Naive thymus-derived CD4-positive, alpha-beta T cell (primary cell): ENCODE measurements at regions of chr3 and their contacts with region 1.

Region 1: DNA sequence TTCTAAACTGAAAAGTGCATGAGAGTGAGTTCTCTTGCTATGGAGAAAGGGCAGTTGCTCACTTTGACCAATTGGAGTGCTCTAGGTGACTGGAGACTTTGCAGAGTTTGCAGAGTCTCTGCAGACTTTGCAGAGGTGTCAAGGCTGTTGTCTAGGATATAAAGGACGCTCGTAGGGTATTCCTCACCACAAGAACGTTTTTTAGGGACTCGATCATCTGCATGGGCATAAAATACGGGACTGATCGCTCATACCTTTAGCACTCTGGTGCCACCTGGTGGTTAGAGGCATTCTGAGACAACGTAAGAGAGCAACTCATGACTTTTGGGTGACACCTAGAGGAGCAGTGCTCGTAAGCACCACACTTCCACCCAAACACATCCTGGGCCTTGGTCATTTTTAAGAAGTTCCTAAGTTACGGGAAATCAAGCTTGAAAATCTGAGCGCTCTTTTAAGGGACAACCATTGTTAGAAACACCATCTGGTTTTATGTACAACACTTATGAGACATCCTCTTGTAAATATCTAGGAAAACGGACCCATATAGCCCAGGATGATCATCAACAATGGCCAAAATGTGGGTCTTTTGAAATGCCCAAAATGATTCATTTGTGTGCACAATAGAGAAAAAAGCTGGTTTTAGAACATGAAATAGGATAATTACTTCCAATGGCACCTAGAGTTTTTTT is 51.6 kb upstream of the XCR1 start:
- DNase-seq: peak; percentile 66 to 89 (median 85)
- ATAC-seq: peak; percentile 100
- H3K4me3 ChIP-seq: no peak overlapping the region
- H3K4me3 Mint-ChIP-seq: peak overlapping the region in 5 of 10 donors; percentile 10 to 63 (median 32)
- H3K27ac ChIP-seq: no peak overlapping the region
- H3K27ac Mint-ChIP-seq: peak overlapping the region in 2 of 9 donors; percentile 3 to 33
- H3K4me1 ChIP-seq: peaks cover 0 to 6% of the 10 kb centered on the region in 2 donors
- H3K4me1 Mint-ChIP-seq: peaks cover 0 to 44% (median 5%) of the 10 kb centered on the region in 7 donors
- H3K27me3 ChIP-seq: no peaks in the 10 kb centered on the region
- H3K27me3 Mint-ChIP-seq: peaks cover 0 to 34% (median 0%) of the 10 kb centered on the region in 5 donors

Region 2: DNA sequence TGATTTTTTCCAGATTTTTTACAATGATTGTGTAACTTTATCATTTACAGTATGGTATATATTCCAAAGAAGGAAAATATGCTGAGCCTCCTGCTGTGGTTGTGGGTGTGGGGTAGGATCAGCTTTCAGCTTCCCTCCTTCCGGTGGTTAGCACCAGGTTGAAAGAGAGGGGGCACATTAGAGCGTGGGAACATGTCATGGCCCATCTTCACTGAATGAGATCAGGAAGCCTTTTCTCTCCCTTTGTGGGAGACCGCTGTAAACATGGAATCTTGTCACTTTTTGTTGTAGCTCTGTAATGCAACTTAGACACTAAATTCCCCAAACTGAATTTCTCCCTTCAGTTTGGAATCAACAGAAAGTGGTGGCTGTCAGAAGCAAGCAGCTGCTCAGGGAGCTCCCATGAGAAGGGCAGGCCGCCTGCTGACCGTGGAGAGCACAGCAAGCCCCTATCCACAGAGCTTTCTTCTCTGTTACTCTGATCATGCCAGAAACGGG is 571.0 kb before region 1 on chr3:
- CTCF ChIA-PET with region 1: interaction called, 4 read pairs
- POLR2A ChIA-PET with region 1: no interaction called
- intact Hi-C with region 1: loop called (anchors 1 to 5 kb)
- DNase-seq: peak in 3 of 9 donors; percentile 8 to 17 (median 14)
- ATAC-seq: no peak
- H3K4me3 ChIP-seq: no peak overlapping the region
- H3K4me3 Mint-ChIP-seq: no peak overlapping the region
- H3K27ac ChIP-seq: no peak overlapping the region
- H3K27ac Mint-ChIP-seq: no peak overlapping the region
- H3K4me1 ChIP-seq: peaks cover 0 to 13% of the 10 kb centered on the region in 2 donors
- H3K4me1 Mint-ChIP-seq: peaks cover 0 to 13% (median 0%) of the 10 kb centered on the region in 7 donors
- H3K27me3 ChIP-seq: no peaks in the 10 kb centered on the region
- H3K27me3 Mint-ChIP-seq: no peaks in the 10 kb centered on the region

Region 3: GRCh38 chr3:45553996-45554666 is 524.7 kb before region 1 on chr3:
- CTCF ChIA-PET with region 1: no interaction called
- POLR2A ChIA-PET with region 1: no interaction called
- intact Hi-C with region 1: no loop called
- DNase-seq: no peak
- ATAC-seq: peak; percentile 60
- H3K4me3 ChIP-seq: no peak overlapping the region
- H3K4me3 Mint-ChIP-seq: no peak overlapping the region
- H3K27ac ChIP-seq: no peak overlapping the region
- H3K27ac Mint-ChIP-seq: peak overlapping the region in 1 of 9 donors; percentile 30
- H3K4me1 ChIP-seq: no peaks in the 10 kb centered on the region
- H3K4me1 Mint-ChIP-seq: peaks cover 0 to 5% (median 0%) of the 10 kb centered on the region in 7 donors
- H3K27me3 ChIP-seq: no peaks in the 10 kb centered on the region
- H3K27me3 Mint-ChIP-seq: no peaks in the 10 kb centered on the region

Region 4: GRCh38 chr3:45688882-45689756 is 389.7 kb before region 1 on chr3 and contains the start of gene SACM1L:
- CTCF ChIA-PET with region 1: no interaction called
- POLR2A ChIA-PET with region 1: no interaction called
- intact Hi-C with region 1: loop called in 1 of 2 experiments (anchors 10 kb)
- DNase-seq: peak; percentile 84 to 97 (median 95)
- ATAC-seq: peak; percentile 90
- H3K4me3 ChIP-seq: peak within 1 kb of the TSS; percentile 80
- H3K4me3 Mint-ChIP-seq: peak within 1 kb of the TSS; percentile 87 to 98 (median 95)
- H3K27ac ChIP-seq: peak within 1 kb of the TSS; percentile 96
- H3K27ac Mint-ChIP-seq: peak within 1 kb of the TSS; percentile 96 to 100 (median 99)
- H3K4me1 ChIP-seq: peaks cover 38 to 39% of the 10 kb centered on the region in 2 donors
- H3K4me1 Mint-ChIP-seq: peaks cover 40 to 74% (median 67%) of the 10 kb centered on the region in 7 donors
- H3K27me3 ChIP-seq: no peaks in the 10 kb centered on the region
- H3K27me3 Mint-ChIP-seq: peaks cover 0 to 5% (median 0%) of the 10 kb centered on the region in 5 donors
- total RNA-seq, gene SACM1L: 60.8 to 93.8 (median 70.5) TPM

Region 5: GRCh38 chr3:45938864-45939263 is 140.0 kb before region 1 on chr3:
- CTCF ChIA-PET with region 1: interaction called, 336 read pairs
- POLR2A ChIA-PET with region 1: interaction called, 17 read pairs
- intact Hi-C with region 1: loop called (anchors 1 kb)
- DNase-seq: peak; percentile 58 to 84 (median 79)
- ATAC-seq: peak; percentile 92
- H3K4me3 ChIP-seq: no peak overlapping the region
- H3K4me3 Mint-ChIP-seq: no peak overlapping the region
- H3K27ac ChIP-seq: no peak overlapping the region
- H3K27ac Mint-ChIP-seq: peak overlapping the region in 1 of 9 donors; percentile 3
- H3K4me1 ChIP-seq: peaks cover 15 to 32% of the 10 kb centered on the region in 2 donors
- H3K4me1 Mint-ChIP-seq: peaks cover 21 to 44% (median 30%) of the 10 kb centered on the region in 7 donors
- H3K27me3 ChIP-seq: no peaks in the 10 kb centered on the region
- H3K27me3 Mint-ChIP-seq: no peaks in the 10 kb centered on the region

Region 6: DNA sequence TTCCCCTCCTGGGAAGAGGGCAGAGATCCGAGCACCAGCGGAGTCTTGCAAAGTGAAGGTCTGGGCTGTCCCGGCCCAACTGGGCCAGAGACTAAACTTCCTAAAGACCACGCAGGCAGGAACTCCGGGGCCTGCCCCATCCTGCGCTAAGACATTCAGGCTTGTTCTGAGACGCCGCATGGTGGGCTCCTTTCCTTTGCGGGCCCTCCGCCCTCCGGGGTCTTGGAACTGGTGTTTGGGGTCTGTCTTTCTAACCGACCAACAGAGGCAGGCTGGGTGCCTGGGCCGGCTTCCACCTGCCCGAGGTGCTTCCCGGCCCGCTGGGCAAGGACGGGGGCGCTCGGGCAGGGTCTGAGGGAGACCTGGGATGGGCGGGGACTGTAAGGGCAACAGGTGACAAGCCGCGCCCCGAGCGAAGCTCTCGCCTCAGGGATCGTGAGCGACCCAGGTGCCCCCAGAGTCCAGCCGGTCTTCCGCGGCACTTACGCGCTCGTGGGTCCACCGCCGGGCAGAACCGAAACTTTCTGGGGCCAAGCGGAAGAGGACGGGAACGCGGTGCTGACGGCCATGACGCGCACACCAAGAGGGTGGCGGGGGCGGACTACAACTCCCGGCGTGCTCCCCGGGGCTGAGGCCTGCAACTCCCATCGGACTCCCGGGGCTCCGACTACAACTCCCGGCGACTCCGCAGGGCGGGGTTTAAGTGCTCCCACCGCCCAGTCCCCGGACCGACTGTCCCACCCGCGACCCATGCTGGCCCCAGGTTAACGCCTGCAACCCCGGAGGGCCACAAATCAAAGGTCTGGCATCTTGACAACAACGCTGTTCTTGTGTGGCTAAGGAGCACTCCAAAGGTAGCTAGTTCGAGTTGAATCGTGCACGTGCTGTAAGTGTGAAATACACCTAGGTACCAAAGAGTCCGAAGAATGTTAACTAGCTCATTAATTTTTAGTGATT is 83.3 kb before region 1 on chr3 and contains the start of gene FYCO1:
- CTCF ChIA-PET with region 1: interaction called, 14 read pairs
- POLR2A ChIA-PET with region 1: no interaction called
- intact Hi-C with region 1: loop called in 1 of 2 experiments (anchors 1 kb)
- DNase-seq: peak; percentile 75 to 87 (median 86)
- ATAC-seq: peak; percentile 96
- H3K4me3 ChIP-seq: peak within 1 kb of the TSS; percentile 85
- H3K4me3 Mint-ChIP-seq: peak within 1 kb of the TSS; percentile 83 to 93 (median 90)
- H3K27ac ChIP-seq: peak within 1 kb of the TSS; percentile 84
- H3K27ac Mint-ChIP-seq: peak within 1 kb of the TSS; percentile 78 to 96 (median 92)
- H3K4me1 ChIP-seq: peaks cover 22 to 48% of the 10 kb centered on the region in 2 donors
- H3K4me1 Mint-ChIP-seq: peaks cover 10 to 49% (median 37%) of the 10 kb centered on the region in 7 donors
- H3K27me3 ChIP-seq: no peaks in the 10 kb centered on the region
- H3K27me3 Mint-ChIP-seq: peaks cover 3 to 11% (median 8%) of the 10 kb centered on the region in 5 donors
- total RNA-seq, gene FYCO1: 20.0 to 27.5 (median 22.9) TPM

Region 7: GRCh38 chr3:46065294-46065721 is 13.5 kb before region 1 on chr3:
- CTCF ChIA-PET with region 1: interaction called, 35 read pairs
- POLR2A ChIA-PET with region 1: interaction called, 5 read pairs
- intact Hi-C with region 1: loop called in 1 of 2 experiments (anchors 1 kb)
- DNase-seq: peak; percentile 25 to 94 (median 80)
- ATAC-seq: peak; percentile 94
- H3K4me3 ChIP-seq: no peak overlapping the region
- H3K4me3 Mint-ChIP-seq: peak overlapping the region; percentile 62 to 88 (median 75)
- H3K27ac ChIP-seq: peak overlapping the region; percentile 56
- H3K27ac Mint-ChIP-seq: peak overlapping the region; percentile 33 to 90 (median 81)
- H3K4me1 ChIP-seq: peaks cover 51 to 62% of the 10 kb centered on the region in 2 donors
- H3K4me1 Mint-ChIP-seq: peaks cover 48 to 82% (median 72%) of the 10 kb centered on the region in 7 donors
- H3K27me3 ChIP-seq: no peaks in the 10 kb centered on the region
- H3K27me3 Mint-ChIP-seq: peaks cover 0 to 68% (median 0%) of the 10 kb centered on the region in 5 donors

Region 8: DNA sequence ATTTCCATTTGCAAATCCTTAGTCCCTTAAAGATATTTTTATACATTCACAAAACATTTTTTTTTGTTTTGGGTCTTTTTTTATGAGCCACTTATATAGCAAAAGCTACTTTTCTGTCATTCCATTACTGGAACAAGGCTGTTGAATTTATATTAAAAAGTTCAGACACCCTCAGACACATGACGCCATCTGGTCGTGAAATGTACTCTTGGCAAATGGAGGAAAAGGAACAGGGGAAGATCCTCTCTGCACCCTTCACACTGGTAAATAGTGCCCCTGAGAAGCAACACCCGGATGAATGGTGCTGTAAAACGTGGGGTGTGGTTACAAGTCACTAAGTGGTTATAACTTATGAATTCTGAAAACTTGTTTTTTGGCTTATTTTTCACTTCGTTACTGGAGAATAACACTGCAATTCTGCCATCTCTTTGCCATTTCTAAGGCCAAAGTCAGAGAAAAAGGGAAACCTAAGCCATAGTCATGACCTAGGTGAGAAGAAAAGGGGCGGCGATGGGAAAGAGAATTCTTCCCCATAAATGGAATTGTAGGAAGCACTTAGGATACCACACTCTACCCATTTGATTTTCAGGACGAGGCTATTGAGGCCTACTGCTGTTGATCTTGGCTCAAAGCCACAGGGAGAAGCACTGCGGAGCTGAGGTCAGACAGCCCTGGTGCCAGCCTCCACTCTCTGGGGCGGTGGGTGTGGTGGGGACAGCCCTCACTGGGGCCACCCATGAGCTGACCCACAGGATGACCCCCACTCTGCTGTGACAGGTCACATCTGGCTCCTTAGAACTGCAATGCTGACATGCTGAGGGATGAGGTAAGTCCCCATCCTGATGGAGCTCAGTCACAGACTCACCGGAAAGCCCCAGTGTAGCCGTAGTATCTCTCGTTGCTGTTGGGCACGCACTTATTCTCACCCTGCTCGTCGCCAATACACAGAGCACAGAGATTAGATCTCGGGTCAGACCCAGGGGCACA is 364.0 kb after region 1 on chr3:
- CTCF ChIA-PET with region 1: no interaction called
- POLR2A ChIA-PET with region 1: no interaction called
- intact Hi-C with region 1: loop called in 1 of 2 experiments (anchors 5 kb)
- DNase-seq: peak in 2 of 9 donors; percentile 35 to 43
- ATAC-seq: peak; percentile 56
- H3K4me3 ChIP-seq: no peak overlapping the region
- H3K4me3 Mint-ChIP-seq: no peak overlapping the region
- H3K27ac ChIP-seq: no peak overlapping the region
- H3K27ac Mint-ChIP-seq: peak overlapping the region in 1 of 9 donors; percentile 58
- H3K4me1 ChIP-seq: peaks cover 12 to 13% of the 10 kb centered on the region in 2 donors
- H3K4me1 Mint-ChIP-seq: peaks cover 15 to 36% (median 27%) of the 10 kb centered on the region in 7 donors
- H3K27me3 ChIP-seq: no peaks in the 10 kb centered on the region
- H3K27me3 Mint-ChIP-seq: peaks cover 0 to 8% (median 0%) of the 10 kb centered on the region in 5 donors